Activated T-helper 1 cell treated with anti-CD3 and anti-CD28 coated beads, Interleukin-12 subunit alpha, Interleukin-12 subunit beta, Interleukin-2, Interleukin-4 antibody, amounts not matched to agents 30 ng/mL and 10 ng/mL and 1 ng/mL, durations not matched to agents 14 hours and 24 hours and 36 hours (primary cell): ENCODE measurements at regions of chr10 and their contacts with region 1.

Region 1: GRCh38 chr10:91409869-91410637 is at the start of gene HECTD2:
- DNase-seq: peak; percentile 75
- H3K4me3 Mint-ChIP-seq: peak within 1 kb of the TSS; percentile 91
- H3K27ac Mint-ChIP-seq: peak within 1 kb of the TSS; percentile 95
- H3K4me1 Mint-ChIP-seq: peaks cover 25% of the 10 kb centered on the region
- H3K27me3 Mint-ChIP-seq: peaks cover 11% of the 10 kb centered on the region
- total RNA-seq, gene HECTD2: 6.2 and 6.4 TPM in 2 replicates

Region 2: GRCh38 chr10:91006001-91006751 is 403.9 kb before region 1 on chr10:
- intact Hi-C with region 1: loop called (anchors 2 kb)
- DNase-seq: peak; percentile 41
- H3K4me3 Mint-ChIP-seq: peak overlapping the region; percentile 8
- H3K27ac Mint-ChIP-seq: peak overlapping the region; percentile 58
- H3K4me1 Mint-ChIP-seq: peaks cover 27% of the 10 kb centered on the region
- H3K27me3 Mint-ChIP-seq: peaks cover 28% of the 10 kb centered on the region

Region 3: GRCh38 chr10:91220194-91220953 is 189.7 kb before region 1 on chr10 and contains the start of gene PCGF5:
- intact Hi-C with region 1: loop called (anchors 5 kb)
- DNase-seq: peak; percentile 91
- H3K4me3 Mint-ChIP-seq: peak within 1 kb of the TSS; percentile 91
- H3K27ac Mint-ChIP-seq: peak within 1 kb of the TSS; percentile 79
- H3K4me1 Mint-ChIP-seq: peaks cover 54% of the 10 kb centered on the region
- H3K27me3 Mint-ChIP-seq: no peaks in the 10 kb centered on the region
- total RNA-seq, gene PCGF5: 51.7 TPM in 2 replicates

Region 4: GRCh38 chr10:91424016-91424415 is 14.0 kb after region 1 on chr10:
- intact Hi-C with region 1: loop called (anchors 1 kb)
- DNase-seq: no peak
- H3K4me3 Mint-ChIP-seq: no peak overlapping the region
- H3K27ac Mint-ChIP-seq: peak overlapping the region; percentile 4
- H3K4me1 Mint-ChIP-seq: peaks cover 23% of the 10 kb centered on the region
- H3K27me3 Mint-ChIP-seq: no peaks in the 10 kb centered on the region

Region 5: DNA sequence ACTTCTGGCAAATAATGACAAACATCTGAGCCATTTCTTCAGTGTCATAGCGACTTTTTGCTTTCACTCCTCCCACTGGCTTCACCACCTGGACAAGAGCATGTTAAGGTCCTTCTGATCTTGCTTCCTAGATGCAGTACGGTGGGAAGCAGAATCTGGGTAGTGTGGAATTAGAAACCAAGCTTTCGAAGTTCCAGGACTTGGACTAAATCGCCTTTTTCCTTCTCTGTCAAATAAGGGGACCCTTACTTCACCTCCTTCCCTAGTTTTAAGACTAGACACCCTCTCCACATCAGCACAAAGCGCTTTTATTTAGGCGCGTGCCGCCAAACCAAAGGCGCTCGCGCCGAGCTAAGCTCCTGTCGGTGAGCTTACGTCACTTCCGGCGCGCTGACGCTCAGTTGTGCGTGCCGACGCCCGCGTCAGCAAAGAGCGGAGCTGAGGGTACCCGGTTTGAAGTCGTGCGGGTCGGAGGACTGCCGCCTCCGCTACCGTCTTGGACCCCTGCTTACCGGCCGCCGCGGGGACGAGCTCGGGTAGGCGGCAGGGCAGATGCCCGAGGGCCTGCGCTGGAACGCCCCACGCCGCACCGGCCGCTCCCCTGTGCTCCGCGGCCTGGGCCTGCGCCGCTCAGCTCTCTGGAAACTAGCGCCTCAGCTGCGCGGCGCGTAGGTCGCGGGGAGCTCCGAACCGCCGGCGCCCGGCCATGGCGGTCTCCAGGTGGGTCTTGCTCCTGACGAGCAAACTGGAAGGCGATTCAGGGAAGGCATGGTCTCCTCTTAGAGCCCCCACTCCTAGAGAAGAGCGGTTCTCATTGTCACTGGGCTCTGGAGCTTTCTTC is 513.5 kb after region 1 on chr10 and contains the start of gene BTAF1:
- intact Hi-C with region 1: loop called (anchors 5 kb)
- DNase-seq: peak; percentile 89
- H3K4me3 Mint-ChIP-seq: peak within 1 kb of the TSS; percentile 98
- H3K27ac Mint-ChIP-seq: peak within 1 kb of the TSS; percentile 99
- H3K4me1 Mint-ChIP-seq: peaks cover 36% of the 10 kb centered on the region
- H3K27me3 Mint-ChIP-seq: peaks cover 9% of the 10 kb centered on the region
- total RNA-seq, gene BTAF1: 58.8 and 59.2 TPM in 2 replicates